CD4-positive, alpha-beta T cell (primary cell): ENCODE measurements at regions of chr15 and their contacts with region 1.

Region 1: DNA sequence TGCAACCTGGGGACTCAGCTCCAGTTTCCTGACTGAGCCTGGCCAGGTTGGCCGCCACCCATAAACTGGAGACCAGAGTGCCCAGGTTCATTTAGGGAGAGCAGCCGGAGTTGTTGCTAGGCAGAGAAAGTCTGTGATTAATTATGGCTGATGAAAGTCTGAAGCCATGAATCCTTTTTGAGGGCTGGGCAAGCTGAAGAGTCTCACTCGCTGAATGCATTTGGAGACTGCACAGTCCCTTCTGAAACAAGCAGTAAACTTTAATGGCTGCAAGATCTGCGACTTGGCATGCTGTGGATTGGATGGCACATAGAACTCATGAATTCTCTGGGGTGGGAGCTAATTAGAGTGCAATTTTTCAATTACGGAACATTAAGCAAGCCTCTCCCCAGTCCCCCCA is 282.1 kb downstream of the RPLP1 start:
- DNase-seq: no peak
- ATAC-seq: no peak
- H3K4me3 ChIP-seq: no peak overlapping the region
- H3K4me3 Mint-ChIP-seq: no peak overlapping the region
- H3K27ac ChIP-seq: no peak overlapping the region
- H3K27ac Mint-ChIP-seq: no peak overlapping the region
- H3K4me1 ChIP-seq: no peaks in the 10 kb centered on the region
- H3K4me1 Mint-ChIP-seq: peaks cover 2% of the 10 kb centered on the region
- H3K27me3 ChIP-seq: no peaks in the 10 kb centered on the region
- H3K27me3 Mint-ChIP-seq: no peaks in the 10 kb centered on the region
- CTCF ChIP-seq: no peak

Region 2: GRCh38 chr15:69668963-69669362 is 65.7 kb before region 1 on chr15:
- CTCF ChIA-PET with region 1: no interaction called
- POLR2A ChIA-PET with region 1: no interaction called
- intact Hi-C with region 1: no loop called
- DNase-seq: peak in 5 of 14 experiments; percentile 11 to 81 (median 49)
- ATAC-seq: peak; percentile 58
- H3K4me3 ChIP-seq: no peak overlapping the region
- H3K4me3 Mint-ChIP-seq: no peak overlapping the region
- H3K27ac ChIP-seq: no peak overlapping the region
- H3K27ac Mint-ChIP-seq: peak overlapping the region; percentile 36
- H3K4me1 ChIP-seq: peaks cover 51% of the 10 kb centered on the region
- H3K4me1 Mint-ChIP-seq: peaks cover 27% of the 10 kb centered on the region
- H3K27me3 ChIP-seq: no peaks in the 10 kb centered on the region
- H3K27me3 Mint-ChIP-seq: no peaks in the 10 kb centered on the region
- CTCF ChIP-seq: no peak

Region 3: DNA sequence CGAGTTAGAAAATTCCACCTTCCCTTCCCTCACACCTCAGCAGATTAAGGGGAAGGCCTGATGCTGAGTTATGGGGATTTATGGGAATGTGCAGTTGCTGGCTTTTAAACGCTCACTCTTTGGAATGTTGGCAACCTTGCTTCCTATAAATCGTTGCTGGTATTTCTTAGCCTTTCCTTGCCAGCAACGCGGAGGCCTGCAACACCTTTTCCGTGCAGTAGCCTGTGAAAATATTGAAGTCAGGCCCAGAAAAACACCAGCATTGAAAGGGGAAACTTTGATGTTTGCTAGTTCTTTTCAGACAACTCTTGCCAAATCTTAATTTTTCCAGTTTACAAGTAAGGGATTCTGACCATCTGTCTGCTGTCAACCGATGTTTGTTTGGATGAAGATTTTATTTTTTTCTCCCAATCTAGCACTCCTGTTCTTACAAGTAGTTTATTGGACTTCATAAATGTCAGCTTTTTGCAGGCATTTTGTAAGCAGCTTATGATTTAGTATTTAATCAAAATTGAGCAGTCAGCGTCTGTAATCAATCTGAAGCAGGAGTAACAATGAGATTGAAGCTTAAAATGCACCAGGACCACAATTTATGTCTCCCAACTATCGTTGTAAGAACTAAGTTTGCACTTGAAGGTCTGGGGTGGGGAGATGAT is 31.0 kb before region 1 on chr15:
- CTCF ChIA-PET with region 1: no interaction called
- POLR2A ChIA-PET with region 1: no interaction called
- intact Hi-C with region 1: no loop called
- DNase-seq: no peak
- ATAC-seq: no peak
- H3K4me3 ChIP-seq: no peak overlapping the region
- H3K4me3 Mint-ChIP-seq: no peak overlapping the region
- H3K27ac ChIP-seq: no peak overlapping the region
- H3K27ac Mint-ChIP-seq: no peak overlapping the region
- H3K4me1 ChIP-seq: no peaks in the 10 kb centered on the region
- H3K4me1 Mint-ChIP-seq: no peaks in the 10 kb centered on the region
- H3K27me3 ChIP-seq: no peaks in the 10 kb centered on the region
- H3K27me3 Mint-ChIP-seq: no peaks in the 10 kb centered on the region
- CTCF ChIP-seq: no peak

Region 4: DNA sequence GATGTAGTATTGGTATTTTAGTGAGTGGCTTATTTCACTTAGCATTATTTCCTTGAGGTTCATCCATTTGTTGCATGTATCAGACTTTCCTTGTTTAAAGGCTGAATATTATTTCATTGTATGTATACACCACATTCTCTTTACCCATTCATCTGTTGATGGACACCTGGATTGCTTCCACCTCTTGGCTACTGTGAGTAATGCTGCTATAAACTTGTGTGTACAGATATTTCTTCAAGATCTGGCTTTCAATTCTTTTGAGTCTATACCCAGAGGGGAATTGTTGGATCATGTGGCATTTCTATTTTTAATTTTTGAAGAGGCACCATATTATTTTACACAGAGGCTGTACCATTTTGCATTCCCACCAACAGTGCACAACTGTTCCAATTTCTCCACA is 31.5 kb after region 1 on chr15:
- CTCF ChIA-PET with region 1: no interaction called
- POLR2A ChIA-PET with region 1: no interaction called
- intact Hi-C with region 1: loop called in 1 of 2 experiments (anchors 5 kb)
- DNase-seq: no peak
- ATAC-seq: no peak
- H3K4me3 ChIP-seq: no peak overlapping the region
- H3K4me3 Mint-ChIP-seq: no peak overlapping the region
- H3K27ac ChIP-seq: no peak overlapping the region
- H3K27ac Mint-ChIP-seq: no peak overlapping the region
- H3K4me1 ChIP-seq: peaks cover 19% of the 10 kb centered on the region
- H3K4me1 Mint-ChIP-seq: peaks cover 41% of the 10 kb centered on the region
- H3K27me3 ChIP-seq: peaks cover 0 to 3% of the 10 kb centered on the region in 2 experiments
- H3K27me3 Mint-ChIP-seq: peaks cover 12% of the 10 kb centered on the region
- CTCF ChIP-seq: no peak

Region 5: GRCh38 chr15:69794645-69795461 is 60.2 kb after region 1 on chr15:
- CTCF ChIA-PET with region 1: no interaction called
- POLR2A ChIA-PET with region 1: no interaction called
- intact Hi-C with region 1: no loop called
- DNase-seq: no peak
- ATAC-seq: no peak
- H3K4me3 ChIP-seq: no peak overlapping the region
- H3K4me3 Mint-ChIP-seq: no peak overlapping the region
- H3K27ac ChIP-seq: no peak overlapping the region
- H3K27ac Mint-ChIP-seq: no peak overlapping the region
- H3K4me1 ChIP-seq: no peaks in the 10 kb centered on the region
- H3K4me1 Mint-ChIP-seq: no peaks in the 10 kb centered on the region
- H3K27me3 ChIP-seq: peaks cover 0 to 4% of the 10 kb centered on the region in 2 experiments
- H3K27me3 Mint-ChIP-seq: no peaks in the 10 kb centered on the region
- CTCF ChIP-seq: no peak

Region 6: DNA sequence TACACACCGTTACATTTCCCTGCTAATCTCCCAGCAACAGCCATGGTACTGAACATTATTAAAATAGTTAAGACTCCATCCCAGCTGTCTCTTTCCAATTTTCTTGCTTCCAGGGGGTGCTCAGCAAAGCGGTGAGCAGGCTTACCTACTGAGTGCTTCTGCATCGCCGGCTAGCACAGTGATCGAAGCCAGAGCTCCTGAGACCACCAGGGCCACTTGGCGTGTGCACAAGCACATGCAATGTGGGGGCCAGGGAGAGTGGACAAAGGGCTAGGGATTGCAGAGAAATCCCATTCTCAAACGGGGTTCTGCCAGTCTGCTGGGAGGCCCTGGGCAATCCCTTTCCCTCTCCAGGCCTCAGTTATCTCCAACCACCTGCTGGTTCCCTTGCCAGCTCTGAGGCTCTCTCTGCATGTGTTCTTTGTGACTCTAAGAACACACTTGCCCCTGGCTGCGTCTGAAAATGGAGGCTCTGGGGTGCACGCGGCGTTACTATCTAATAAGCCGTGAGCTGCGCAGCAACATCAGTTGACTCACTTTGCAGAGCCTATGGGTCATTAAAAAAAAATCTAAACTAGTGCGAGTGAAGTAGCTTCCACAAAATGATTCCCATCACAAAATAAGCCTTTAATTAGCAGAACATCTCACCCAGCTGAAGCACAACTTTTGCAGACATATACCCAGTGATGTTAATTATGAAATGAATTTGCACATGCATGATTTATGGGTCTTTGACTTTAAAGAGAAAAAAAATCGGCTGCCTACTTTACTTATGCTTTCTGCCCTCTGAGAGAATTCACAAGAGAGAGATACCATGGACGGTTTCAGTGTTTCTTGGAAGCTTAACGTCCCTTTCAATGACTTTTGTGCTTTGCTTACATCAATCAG is 91.5 kb after region 1 on chr15:
- CTCF ChIA-PET with region 1: no interaction called
- POLR2A ChIA-PET with region 1: no interaction called
- intact Hi-C with region 1: loop called in 1 of 2 experiments (anchors 5 kb)
- DNase-seq: no peak
- ATAC-seq: no peak
- H3K4me3 ChIP-seq: no peak overlapping the region
- H3K4me3 Mint-ChIP-seq: no peak overlapping the region
- H3K27ac ChIP-seq: no peak overlapping the region
- H3K27ac Mint-ChIP-seq: no peak overlapping the region
- H3K4me1 ChIP-seq: no peaks in the 10 kb centered on the region
- H3K4me1 Mint-ChIP-seq: no peaks in the 10 kb centered on the region
- H3K27me3 ChIP-seq: no peaks in the 10 kb centered on the region
- H3K27me3 Mint-ChIP-seq: no peaks in the 10 kb centered on the region
- CTCF ChIP-seq: no peak